ENCODE measurements at regions of chr1 and their contacts with region 1.

Region 1: GRCh38 chr1:75785983-75786853 is at the start of gene RABGGTB:
- DNase-seq: peak; percentile 93 to 94
- H3K4me3 ChIP-seq: peak within 1 kb of the TSS; percentile 60
- H3K4me3 Mint-ChIP-seq: peak within 1 kb of the TSS; percentile 98
- H3K27ac Mint-ChIP-seq: peak within 1 kb of the TSS; percentile 97
- H3K4me1 ChIP-seq: peaks cover 24% of the 10 kb centered on the region
- H3K4me1 Mint-ChIP-seq: peaks cover 6% of the 10 kb centered on the region
- H3K27me3 ChIP-seq: no peaks in the 10 kb centered on the region
- H3K27me3 Mint-ChIP-seq: no peaks in the 10 kb centered on the region
- CTCF ChIP-seq: no peak
- total RNA-seq, gene RABGGTB: 88.6 and 96.0 TPM in 2 replicates

Region 2: DNA sequence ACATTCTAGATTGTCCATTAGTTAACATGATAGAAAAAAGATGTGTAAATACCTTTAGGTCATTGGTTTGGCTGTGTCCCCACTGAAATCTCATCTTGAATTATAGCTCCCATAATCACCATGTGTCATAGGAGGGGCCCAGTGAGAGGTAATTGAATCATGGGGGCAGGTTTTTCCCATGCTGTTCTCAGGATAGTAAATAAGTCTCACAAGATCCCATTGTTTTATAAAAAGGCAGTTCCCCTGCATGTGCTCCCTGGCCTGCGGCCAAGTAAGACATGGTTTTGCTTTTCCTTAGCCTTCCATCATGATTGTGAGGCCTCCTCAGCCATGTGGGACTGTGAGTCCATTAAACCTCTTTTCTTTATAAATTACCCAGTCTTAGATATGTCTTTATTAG is 142.8 kb before region 1 on chr1:
- CTCF ChIA-PET with region 1: no interaction called
- POLR2A ChIA-PET with region 1: no interaction called
- intact Hi-C with region 1: loop called (anchors 5 kb)
- DNase-seq: no peak
- H3K4me3 ChIP-seq: no peak overlapping the region
- H3K4me3 Mint-ChIP-seq: no peak overlapping the region
- H3K27ac Mint-ChIP-seq: no peak overlapping the region
- H3K4me1 ChIP-seq: no peaks in the 10 kb centered on the region
- H3K4me1 Mint-ChIP-seq: no peaks in the 10 kb centered on the region
- H3K27me3 ChIP-seq: no peaks in the 10 kb centered on the region
- H3K27me3 Mint-ChIP-seq: no peaks in the 10 kb centered on the region
- CTCF ChIP-seq: no peak

Region 3: GRCh38 chr1:75696000-75696399 is 90.2 kb before region 1 on chr1:
- CTCF ChIA-PET with region 1: no interaction called
- POLR2A ChIA-PET with region 1: no interaction called
- intact Hi-C with region 1: no loop called
- DNase-seq: no peak
- H3K4me3 ChIP-seq: no peak overlapping the region
- H3K4me3 Mint-ChIP-seq: no peak overlapping the region
- H3K27ac Mint-ChIP-seq: no peak overlapping the region
- H3K4me1 ChIP-seq: no peaks in the 10 kb centered on the region
- H3K4me1 Mint-ChIP-seq: no peaks in the 10 kb centered on the region
- H3K27me3 ChIP-seq: no peaks in the 10 kb centered on the region
- H3K27me3 Mint-ChIP-seq: no peaks in the 10 kb centered on the region
- CTCF ChIP-seq: no peak

Region 4: GRCh38 chr1:75724472-75725022 is 61.7 kb before region 1 on chr1 and contains the start of gene ACADM:
- CTCF ChIA-PET with region 1: no interaction called
- POLR2A ChIA-PET with region 1: no interaction called
- intact Hi-C with region 1: loop called (anchors 2 kb)
- DNase-seq: peak; percentile 81 to 82
- H3K4me3 ChIP-seq: peak within 1 kb of the TSS; percentile 66
- H3K4me3 Mint-ChIP-seq: peak within 1 kb of the TSS; percentile 90
- H3K27ac Mint-ChIP-seq: peak within 1 kb of the TSS; percentile 76
- H3K4me1 ChIP-seq: peaks cover 30% of the 10 kb centered on the region
- H3K4me1 Mint-ChIP-seq: no peaks in the 10 kb centered on the region
- H3K27me3 ChIP-seq: no peaks in the 10 kb centered on the region
- H3K27me3 Mint-ChIP-seq: no peaks in the 10 kb centered on the region
- CTCF ChIP-seq: no peak
- total RNA-seq, gene ACADM: 39.7 and 44.4 TPM in 2 replicates

Region 5: DNA sequence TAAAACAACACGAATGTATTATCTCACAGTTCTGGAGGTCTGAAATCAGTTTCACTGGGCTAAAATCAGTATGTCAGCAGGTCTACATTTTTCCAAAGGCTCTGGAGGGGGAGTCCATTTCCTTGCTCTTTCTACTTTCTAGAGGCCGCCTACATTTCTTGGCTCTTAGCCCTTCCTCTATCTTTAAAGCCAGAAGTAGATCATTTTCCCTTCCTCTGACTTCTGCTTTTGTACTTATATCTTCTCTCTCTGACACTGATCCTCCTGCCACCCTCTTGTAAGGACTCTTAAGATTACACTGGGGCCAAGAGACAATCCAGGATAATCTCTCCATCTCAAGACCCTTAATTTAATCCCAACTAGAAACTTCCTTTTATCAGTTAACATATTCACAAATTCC is 51.9 kb after region 1 on chr1:
- CTCF ChIA-PET with region 1: no interaction called
- POLR2A ChIA-PET with region 1: no interaction called
- intact Hi-C with region 1: loop called (anchors 5 kb)
- DNase-seq: no peak
- H3K4me3 ChIP-seq: no peak overlapping the region
- H3K4me3 Mint-ChIP-seq: no peak overlapping the region
- H3K27ac Mint-ChIP-seq: no peak overlapping the region
- H3K4me1 ChIP-seq: peaks cover 5% of the 10 kb centered on the region; the same call in 1 of the 2 replicates
- H3K4me1 Mint-ChIP-seq: peaks cover 11% of the 10 kb centered on the region
- H3K27me3 ChIP-seq: no peaks in the 10 kb centered on the region
- H3K27me3 Mint-ChIP-seq: no peaks in the 10 kb centered on the region
- CTCF ChIP-seq: no peak

Measured in Caco-2 (cell line).